AG04449 (cell line): ENCODE measurements at regions of chr7 and their contacts with region 1.

Region 1: DNA sequence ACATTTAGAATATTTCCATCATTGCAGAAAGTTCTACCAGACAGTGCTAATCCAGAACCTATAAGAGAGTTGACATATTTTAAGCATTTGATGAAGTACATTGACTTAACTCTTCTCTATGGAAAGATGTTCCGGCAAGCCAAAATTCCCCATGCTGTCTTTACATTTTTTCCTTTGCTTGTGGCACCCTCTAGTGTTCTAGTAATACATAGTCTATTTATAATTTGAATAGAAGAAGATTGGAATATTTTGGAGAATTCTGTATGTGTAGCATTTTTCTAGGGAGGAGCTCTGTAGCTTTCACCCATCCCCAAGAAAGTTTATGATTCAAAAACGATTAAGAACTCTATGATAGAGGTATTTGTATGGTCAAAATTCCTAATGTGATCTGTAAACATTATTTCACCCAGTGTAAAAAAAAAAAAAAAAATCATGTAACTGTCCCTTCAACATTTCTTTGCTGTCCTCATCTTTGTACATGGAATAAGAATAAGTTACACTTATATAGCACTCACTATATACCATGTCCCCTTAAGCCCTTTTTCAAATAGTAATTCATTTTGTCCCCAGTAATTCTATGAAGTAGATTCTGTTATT is 33.2 kb downstream of the NRF1 start:
- DNase-seq: no peak
- H3K4me3 ChIP-seq: no peak overlapping the region
- CTCF ChIP-seq: peak; percentile 14

Region 2: DNA sequence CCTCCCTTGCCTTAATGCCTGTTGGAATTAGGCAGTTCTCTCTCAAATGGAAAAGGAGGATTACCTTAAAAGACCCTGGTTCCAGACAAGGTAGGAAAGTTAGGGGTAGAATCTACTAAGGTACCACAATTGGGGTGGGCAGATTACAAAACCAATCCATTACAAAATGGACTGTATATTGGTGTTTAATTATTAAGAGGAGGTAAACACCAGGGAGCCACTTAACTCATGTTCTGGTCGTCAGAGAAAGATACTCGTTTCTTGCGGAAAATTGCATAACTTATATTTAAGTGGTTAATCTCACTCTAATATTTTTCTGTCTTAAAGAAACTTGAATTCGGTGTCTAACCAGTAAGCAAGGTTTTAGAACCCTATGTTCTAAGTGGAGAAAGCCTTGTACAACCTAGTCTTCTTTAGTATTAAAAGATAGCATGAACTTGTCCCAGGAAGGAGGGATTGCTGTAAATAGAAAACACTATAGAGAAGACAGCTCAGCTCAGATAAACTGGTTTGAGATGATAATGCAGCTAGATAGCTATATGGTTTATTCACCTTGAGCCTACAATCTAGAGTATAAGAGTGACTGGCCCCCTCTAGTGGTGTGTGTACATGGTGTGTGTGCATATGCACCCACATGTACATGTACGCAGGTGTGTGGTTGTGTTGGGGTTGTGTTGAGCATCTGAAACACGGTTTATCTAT is 268.5 kb before region 1 on chr7:
- CTCF ChIA-PET with region 1: interaction called, 23 read pairs
- POLR2A ChIA-PET with region 1: no interaction called
- DNase-seq: no peak
- H3K4me3 ChIP-seq: no peak overlapping the region
- CTCF ChIP-seq: peak; percentile 47

Region 3: DNA sequence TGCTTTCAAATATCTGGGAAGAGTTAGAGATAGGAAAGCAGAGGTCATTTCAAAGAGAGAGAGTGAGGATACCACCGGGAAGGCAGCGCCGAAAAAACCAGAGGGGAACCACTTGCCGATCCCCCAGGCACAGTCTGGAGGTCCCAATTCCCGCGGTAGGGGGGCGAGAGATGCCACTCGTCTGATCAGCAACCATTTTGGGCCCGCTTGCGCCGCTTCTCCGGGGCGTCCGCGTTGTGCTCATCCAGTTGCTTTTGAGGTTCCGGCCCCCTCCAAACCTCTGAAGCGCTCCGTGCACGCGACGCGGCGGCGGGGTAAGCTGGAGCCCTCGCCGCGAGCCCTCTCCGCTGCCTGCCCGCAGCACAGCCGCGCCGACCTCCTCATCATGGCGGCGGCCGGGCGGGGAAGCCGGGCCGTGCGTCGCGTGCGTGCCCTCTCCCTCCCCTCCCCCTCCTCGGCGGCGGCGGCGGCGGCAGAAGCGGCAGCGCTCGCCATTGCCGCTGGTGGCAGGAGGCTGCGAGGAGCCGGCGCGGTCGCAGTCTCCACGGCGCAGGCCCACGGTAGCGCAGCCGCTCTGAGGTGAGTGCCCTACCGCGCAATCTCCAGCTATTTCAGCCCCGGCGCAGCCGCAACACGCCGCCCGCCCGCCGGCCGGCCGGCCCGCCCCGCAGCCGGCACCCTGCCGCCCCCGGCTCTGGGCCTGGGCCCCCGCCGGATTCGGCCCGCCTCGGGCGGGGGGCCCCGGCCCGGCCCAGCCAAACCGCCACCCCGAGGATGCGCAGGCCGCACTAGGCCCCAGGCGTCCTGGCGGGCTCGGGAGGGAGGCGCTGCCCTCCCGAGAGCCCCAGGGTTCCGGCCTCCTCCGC is 33.3 kb before region 1 on chr7 and contains the start of gene NRF1:
- CTCF ChIA-PET with region 1: interaction called, 61 read pairs
- POLR2A ChIA-PET with region 1: no interaction called
- DNase-seq: peak; percentile 19
- H3K4me3 ChIP-seq: peak within 1 kb of the TSS; percentile 81
- CTCF ChIP-seq: peak; percentile 43

Region 4: DNA sequence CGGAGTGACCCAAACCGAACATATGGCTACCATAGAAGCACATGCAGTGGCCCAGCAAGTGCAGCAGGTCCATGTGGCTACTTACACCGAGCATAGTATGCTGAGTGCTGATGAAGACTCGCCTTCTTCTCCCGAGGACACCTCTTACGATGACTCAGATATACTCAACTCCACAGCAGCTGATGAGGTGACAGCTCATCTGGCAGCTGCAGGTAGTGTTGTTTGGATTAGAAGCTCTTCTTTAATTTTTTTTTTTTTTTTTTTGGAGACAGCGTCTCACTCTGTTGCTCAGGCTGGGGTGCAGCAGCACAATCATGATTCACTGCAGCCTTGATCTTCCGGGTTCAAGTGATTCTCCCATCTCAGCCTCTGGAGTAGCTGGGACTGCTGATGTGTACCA is 12.6 kb after region 1 on chr7:
- CTCF ChIA-PET with region 1: interaction called, 12 read pairs
- POLR2A ChIA-PET with region 1: no interaction called
- DNase-seq: no peak
- H3K4me3 ChIP-seq: no peak overlapping the region
- CTCF ChIP-seq: no peak

Region 5: GRCh38 chr7:130010689-130011412 is 366.1 kb after region 1 on chr7:
- CTCF ChIA-PET with region 1: interaction called, 27 read pairs
- POLR2A ChIA-PET with region 1: no interaction called
- DNase-seq: peak; percentile 45
- H3K4me3 ChIP-seq: no peak overlapping the region; the same call in 1 of the 2 replicates
- CTCF ChIP-seq: peak; percentile 82